Natural killer cell (primary cell): ENCODE measurements at regions of chr19 and their contacts with region 1.

Region 1: DNA sequence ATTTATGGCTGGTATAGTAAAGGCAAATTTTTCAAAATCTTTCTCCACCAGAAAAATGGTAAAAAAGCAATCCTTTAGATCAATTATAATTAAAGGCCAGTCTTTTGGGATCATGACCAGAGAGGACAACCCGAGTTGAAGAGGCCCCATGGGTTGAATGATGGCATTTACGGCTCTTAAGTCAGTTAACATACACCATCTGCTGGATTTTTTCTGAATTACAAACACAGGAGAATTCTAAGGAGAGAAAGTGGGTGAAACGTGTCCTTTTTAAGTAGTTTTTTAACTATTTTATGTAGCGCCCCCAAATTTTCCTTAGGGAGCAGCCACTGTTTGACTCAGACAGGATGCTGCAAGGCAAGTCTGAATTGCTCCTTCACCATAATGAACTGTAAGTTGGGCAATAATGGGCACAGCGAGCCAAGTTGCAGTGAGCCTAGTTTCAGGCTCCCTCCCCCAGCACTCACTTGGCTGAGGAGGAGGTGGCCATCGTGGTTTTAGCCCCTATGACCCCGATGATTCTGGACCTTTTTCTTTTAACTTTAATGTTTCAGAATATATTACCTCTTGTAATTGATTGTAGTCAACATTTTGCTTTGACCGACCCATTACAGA is 13.6 kb upstream of the ZNF611 start:
- DNase-seq: peak in 1 of 2 donors; percentile 76
- ATAC-seq: peak in 2 of 3 donors; percentile 40 to 49
- H3K4me3 ChIP-seq: no peak overlapping the region
- H3K4me3 Mint-ChIP-seq: no peak overlapping the region
- H3K27ac ChIP-seq: no peak overlapping the region
- H3K27ac Mint-ChIP-seq: peak overlapping the region; percentile 50 to 95
- H3K4me1 ChIP-seq: peaks cover 8% of the 10 kb centered on the region
- H3K4me1 Mint-ChIP-seq: peaks cover 20 to 34% of the 10 kb centered on the region in 2 donors
- H3K27me3 ChIP-seq: no peaks in the 10 kb centered on the region
- H3K27me3 Mint-ChIP-seq: no peaks in the 10 kb centered on the region
- CTCF ChIP-seq: peak; percentile 24

Region 2: DNA sequence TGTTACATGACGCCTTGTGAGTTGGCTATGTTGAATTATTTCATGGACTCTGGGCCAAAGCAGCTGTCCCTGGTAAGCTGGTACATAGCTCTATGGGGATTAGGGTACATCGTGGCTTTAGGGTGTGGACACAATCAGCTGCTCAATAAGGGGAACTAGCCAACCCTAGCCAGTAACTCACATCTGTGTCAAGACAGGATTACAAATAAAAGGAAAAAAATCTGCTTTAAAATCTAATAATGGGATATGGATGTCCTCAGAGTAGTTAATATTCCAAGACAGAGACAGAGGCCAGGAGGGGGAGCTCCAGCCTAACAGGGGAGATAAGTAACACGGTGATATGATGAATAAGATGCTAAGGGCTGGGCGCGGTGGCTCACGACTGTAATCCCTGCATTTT is 500.2 kb before region 1 on chr19:
- intact Hi-C with region 1: loop called (anchors 5 kb)
- DNase-seq: peak; percentile 34 to 77
- ATAC-seq: peak; percentile 55 to 84 (median 81)
- H3K4me3 ChIP-seq: no peak overlapping the region
- H3K4me3 Mint-ChIP-seq: no peak overlapping the region
- H3K27ac ChIP-seq: no peak overlapping the region
- H3K27ac Mint-ChIP-seq: no peak overlapping the region
- H3K4me1 ChIP-seq: no peaks in the 10 kb centered on the region
- H3K4me1 Mint-ChIP-seq: no peaks in the 10 kb centered on the region
- H3K27me3 ChIP-seq: no peaks in the 10 kb centered on the region
- H3K27me3 Mint-ChIP-seq: no peaks in the 10 kb centered on the region
- CTCF ChIP-seq: peak; percentile 46

Region 3: GRCh38 chr19:52343548-52343947 is 404.9 kb before region 1 on chr19:
- intact Hi-C with region 1: loop called (anchors 5 kb)
- DNase-seq: peak; percentile 45 to 77
- ATAC-seq: peak; percentile 72 to 95 (median 91)
- H3K4me3 ChIP-seq: no peak overlapping the region
- H3K4me3 Mint-ChIP-seq: no peak overlapping the region
- H3K27ac ChIP-seq: no peak overlapping the region
- H3K27ac Mint-ChIP-seq: no peak overlapping the region
- H3K4me1 ChIP-seq: peaks cover 3% of the 10 kb centered on the region
- H3K4me1 Mint-ChIP-seq: peaks cover 0 to 5% of the 10 kb centered on the region in 2 donors
- H3K27me3 ChIP-seq: no peaks in the 10 kb centered on the region
- H3K27me3 Mint-ChIP-seq: no peaks in the 10 kb centered on the region
- CTCF ChIP-seq: peak; percentile 63

Region 4: GRCh38 chr19:52690369-52691214 is 57.9 kb before region 1 on chr19:
- intact Hi-C with region 1: loop called (anchors 10 kb)
- DNase-seq: peak; percentile 91 to 95
- ATAC-seq: peak; percentile 93 to 97 (median 95)
- H3K4me3 ChIP-seq: peak overlapping the region; percentile 84
- H3K4me3 Mint-ChIP-seq: peak overlapping the region; percentile 97
- H3K27ac ChIP-seq: peak overlapping the region; percentile 81
- H3K27ac Mint-ChIP-seq: peak overlapping the region; percentile 92 to 93
- H3K4me1 ChIP-seq: peaks cover 18% of the 10 kb centered on the region
- H3K4me1 Mint-ChIP-seq: peaks cover 29 to 34% of the 10 kb centered on the region in 2 donors
- H3K27me3 ChIP-seq: no peaks in the 10 kb centered on the region
- H3K27me3 Mint-ChIP-seq: no peaks in the 10 kb centered on the region
- CTCF ChIP-seq: no peak

Region 5: DNA sequence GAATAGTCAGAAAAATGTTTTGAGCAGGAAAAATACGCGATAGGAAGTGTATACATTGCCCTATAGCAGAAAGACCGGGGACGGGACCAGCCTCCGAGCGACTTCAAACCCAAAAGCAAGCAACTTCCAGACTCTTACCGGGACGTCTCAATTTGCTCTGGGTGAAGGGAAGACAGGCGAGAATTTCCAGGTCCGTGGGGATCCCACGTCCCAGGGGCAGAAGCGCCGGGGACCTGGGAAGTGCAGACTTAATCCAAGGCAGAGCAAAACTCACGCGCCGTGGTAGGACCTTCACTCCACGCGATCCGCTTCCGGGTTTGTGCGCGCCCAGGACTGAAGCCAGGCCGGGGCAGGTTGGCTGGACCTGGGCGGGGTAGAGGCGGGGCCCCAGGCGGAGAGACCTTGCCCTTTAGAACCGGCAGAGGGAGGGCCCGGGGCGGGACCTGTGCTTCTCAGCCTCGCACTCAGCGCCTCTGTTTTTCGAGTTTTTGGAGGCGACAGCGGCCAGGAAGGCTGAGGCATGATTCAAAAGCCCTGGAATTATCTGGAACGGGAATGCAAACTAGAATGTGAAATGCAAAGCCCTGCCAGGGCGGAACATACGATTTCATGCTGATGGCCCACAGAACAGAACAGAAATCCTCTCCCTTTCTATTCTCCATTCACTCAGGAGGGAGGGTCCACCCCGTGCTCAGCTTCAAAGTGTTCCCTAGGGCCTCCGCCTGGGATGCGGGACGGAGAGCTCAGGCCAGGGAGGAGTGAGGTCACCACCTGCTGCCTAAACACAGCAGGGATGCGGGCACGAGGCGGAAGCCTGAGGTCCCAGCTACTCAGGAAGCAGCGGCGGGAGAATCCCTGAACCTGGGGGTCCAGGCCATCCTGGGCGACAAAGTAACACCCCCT is 38.3 kb after region 1 on chr19 and contains the start of gene ZNF600:
- intact Hi-C with region 1: loop called (anchors 5 kb)
- DNase-seq: peak; percentile 81
- ATAC-seq: peak; percentile 97 to 98 (median 97)
- H3K4me3 ChIP-seq: peak within 1 kb of the TSS; percentile 88
- H3K4me3 Mint-ChIP-seq: peak within 1 kb of the TSS; percentile 92
- H3K27ac ChIP-seq: peak within 1 kb of the TSS; percentile 70
- H3K27ac Mint-ChIP-seq: peak within 1 kb of the TSS; percentile 57 to 88
- H3K4me1 ChIP-seq: peaks cover 50% of the 10 kb centered on the region
- H3K4me1 Mint-ChIP-seq: peaks cover 53 to 58% of the 10 kb centered on the region in 2 donors
- H3K27me3 ChIP-seq: no peaks in the 10 kb centered on the region
- H3K27me3 Mint-ChIP-seq: no peaks in the 10 kb centered on the region
- CTCF ChIP-seq: no peak
- total RNA-seq, gene ZNF600: 28.8 to 157 (median 73.1) TPM

Region 6: GRCh38 chr19:52942386-52943133 is 194.1 kb after region 1 on chr19:
- intact Hi-C with region 1: loop called (anchors 10 kb)
- DNase-seq: peak; percentile 94 to 100
- ATAC-seq: peak; percentile 99 to 100 (median 99)
- H3K4me3 ChIP-seq: peak overlapping the region; percentile 74
- H3K4me3 Mint-ChIP-seq: peak overlapping the region; percentile 97
- H3K27ac ChIP-seq: peak overlapping the region; percentile 75
- H3K27ac Mint-ChIP-seq: peak overlapping the region; percentile 87 to 91
- H3K4me1 ChIP-seq: peaks cover 21% of the 10 kb centered on the region
- H3K4me1 Mint-ChIP-seq: peaks cover 24 to 29% of the 10 kb centered on the region in 2 donors
- H3K27me3 ChIP-seq: no peaks in the 10 kb centered on the region
- H3K27me3 Mint-ChIP-seq: no peaks in the 10 kb centered on the region
- CTCF ChIP-seq: no peak